ENCODE measurements at regions of chr5 and their contacts with region 1.

Region 1: GRCh38 chr5:177599731-177600507 is at the start of gene B4GALT7:
- DNase-seq: peak; percentile 88
- H3K4me3 ChIP-seq: peak within 1 kb of the TSS; percentile 74
- H3K27ac ChIP-seq: peak within 1 kb of the TSS; percentile 47
- H3K4me1 ChIP-seq: peaks cover 15% of the 10 kb centered on the region
- CTCF ChIP-seq: no peak
- total RNA-seq, gene B4GALT7: 19.8 and 24.9 TPM in 2 replicates

Region 2: GRCh38 chr5:177362610-177363507 is 237.1 kb before region 1 on chr5:
- CTCF ChIA-PET with region 1: no interaction called
- POLR2A ChIA-PET with region 1: no interaction called
- intact Hi-C with region 1: no loop called
- DNase-seq: peak; percentile 48
- H3K4me3 ChIP-seq: peak overlapping the region; percentile 60
- H3K27ac ChIP-seq: peak overlapping the region; percentile 84
- H3K4me1 ChIP-seq: peaks cover 62% of the 10 kb centered on the region
- CTCF ChIP-seq: no peak

Region 3: DNA sequence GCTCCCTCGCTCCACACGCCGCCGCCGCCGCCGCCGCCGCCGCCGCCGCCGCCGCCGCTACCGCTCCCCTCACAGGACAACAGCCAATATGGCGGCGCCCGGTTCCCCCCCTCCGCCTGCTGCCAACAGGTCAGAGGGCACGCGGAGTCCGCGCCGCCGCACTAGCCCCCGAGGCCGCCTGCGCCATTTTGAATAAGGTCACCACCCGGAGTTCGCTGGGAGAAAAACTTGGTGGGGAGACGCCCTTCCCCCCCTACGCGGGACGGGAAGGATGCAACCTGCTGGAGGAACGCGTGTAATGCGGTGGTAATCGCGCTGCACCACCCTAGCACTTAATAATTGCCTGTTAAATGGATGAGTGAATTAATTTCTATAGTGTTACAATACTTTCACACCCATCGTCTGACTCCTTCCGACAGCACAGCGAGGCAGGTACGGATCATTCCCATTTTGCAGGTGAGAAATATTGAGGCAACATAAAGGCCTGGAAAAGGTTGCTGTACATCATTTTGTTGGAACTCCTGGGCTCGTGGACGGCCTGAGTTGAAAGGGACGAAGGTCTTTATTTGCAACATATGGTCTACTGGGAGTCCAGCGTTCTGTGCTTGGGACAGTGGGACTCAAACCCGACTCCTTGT is 45.3 kb before region 1 on chr5 and contains the start of gene FAM193B:
- CTCF ChIA-PET with region 1: no interaction called
- POLR2A ChIA-PET with region 1: no interaction called
- intact Hi-C with region 1: loop called (anchors 2 kb)
- DNase-seq: peak; percentile 92
- H3K4me3 ChIP-seq: peak within 1 kb of the TSS; percentile 92
- H3K27ac ChIP-seq: peak within 1 kb of the TSS; percentile 25
- H3K4me1 ChIP-seq: peaks cover 15% of the 10 kb centered on the region
- CTCF ChIP-seq: peak; percentile 48
- total RNA-seq, gene FAM193B: 63.2 and 92.8 TPM in 2 replicates

Region 4: GRCh38 chr5:177611446-177612214 is 11.7 kb after region 1 on chr5:
- CTCF ChIA-PET with region 1: no interaction called
- POLR2A ChIA-PET with region 1: no interaction called
- intact Hi-C with region 1: no loop called
- DNase-seq: no peak
- H3K4me3 ChIP-seq: no peak overlapping the region
- H3K27ac ChIP-seq: no peak overlapping the region
- H3K4me1 ChIP-seq: no peaks in the 10 kb centered on the region
- CTCF ChIP-seq: no peak

Region 5: GRCh38 chr5:179599975-179600391 is 2000.1 kb after region 1 on chr5:
- CTCF ChIA-PET with region 1: no interaction called
- POLR2A ChIA-PET with region 1: interaction called, 10 read pairs
- intact Hi-C with region 1: no loop called
- DNase-seq: no peak
- H3K4me3 ChIP-seq: no peak overlapping the region
- H3K27ac ChIP-seq: no peak overlapping the region
- H3K4me1 ChIP-seq: no peaks in the 10 kb centered on the region
- CTCF ChIP-seq: no peak

Measured in OCI-LY7 (cell line).